ENCODE measurements at regions of chr2 and their contacts with region 1.

Region 1: DNA sequence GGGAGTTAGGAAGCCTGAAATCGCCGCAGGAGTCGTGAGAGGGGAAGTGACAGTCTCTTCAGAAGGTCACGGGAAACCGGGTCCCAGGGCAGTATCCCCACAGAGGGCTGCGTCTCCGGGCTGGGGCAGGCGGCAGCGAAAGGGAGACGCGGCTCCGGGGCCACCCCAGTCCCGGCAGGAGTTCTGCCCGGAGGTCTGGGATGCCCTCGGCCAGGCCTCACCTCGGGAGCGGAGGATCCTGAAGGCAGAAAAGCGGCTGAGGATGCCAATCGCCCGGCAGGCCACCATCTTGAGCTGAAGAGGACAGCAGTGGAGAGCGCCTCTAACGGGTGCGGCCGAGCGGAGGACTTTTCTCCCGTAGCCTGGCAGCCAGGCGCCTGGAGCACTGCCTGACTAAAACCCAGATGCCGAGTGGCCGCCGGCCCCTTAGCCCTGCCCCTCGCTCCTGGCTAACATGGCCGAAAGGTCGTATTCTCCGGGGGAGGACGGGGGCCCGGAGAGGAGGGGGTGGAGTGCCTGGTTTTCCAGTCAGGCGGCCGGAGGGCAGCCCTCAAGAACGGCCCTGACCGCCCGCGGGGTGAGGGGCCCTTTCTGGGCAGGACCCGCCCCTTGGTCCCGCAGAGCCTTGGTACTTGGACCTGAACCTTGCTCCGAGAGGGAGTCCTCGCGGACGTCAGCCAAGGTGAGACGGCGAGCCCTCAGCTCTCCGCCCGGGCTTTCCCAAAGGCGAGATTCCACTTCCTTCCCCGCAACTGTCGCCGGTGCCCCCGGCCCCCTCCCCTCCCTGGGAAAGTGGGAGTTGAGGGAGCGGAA is at the starts of genes HADHA and HADHB:
- DNase-seq: peak; percentile 88
- ATAC-seq: peak; percentile 84
- H3K4me3 Mint-ChIP-seq: peak within 1 kb of the TSS; percentile 97
- H3K27ac Mint-ChIP-seq: peak within 1 kb of the TSS; percentile 100
- H3K4me1 Mint-ChIP-seq: peaks cover 72% of the 10 kb centered on the region
- H3K27me3 Mint-ChIP-seq: no peaks in the 10 kb centered on the region
- CTCF ChIP-seq: no peak
- total RNA-seq, gene HADHA: 127 and 128 TPM in 2 replicates
- total RNA-seq, gene HADHB: 62.4 and 65.6 TPM in 2 replicates

Region 2: GRCh38 chr2:25878361-25879132 is 366.0 kb before region 1 on chr2 and contains the start of gene ASXL2:
- CTCF ChIA-PET with region 1: no interaction called
- POLR2A ChIA-PET with region 1: interaction called, 5 read pairs
- intact Hi-C with region 1: loop called (anchors 1 kb)
- DNase-seq: peak; percentile 98
- ATAC-seq: peak; percentile 88
- H3K4me3 Mint-ChIP-seq: peak within 1 kb of the TSS; percentile 98
- H3K27ac Mint-ChIP-seq: peak within 1 kb of the TSS; percentile 100
- H3K4me1 Mint-ChIP-seq: peaks cover 24% of the 10 kb centered on the region
- H3K27me3 Mint-ChIP-seq: peaks cover 2% of the 10 kb centered on the region
- CTCF ChIP-seq: no peak
- total RNA-seq, gene ASXL2: 38.4 and 41.9 TPM in 2 replicates

Region 3: DNA sequence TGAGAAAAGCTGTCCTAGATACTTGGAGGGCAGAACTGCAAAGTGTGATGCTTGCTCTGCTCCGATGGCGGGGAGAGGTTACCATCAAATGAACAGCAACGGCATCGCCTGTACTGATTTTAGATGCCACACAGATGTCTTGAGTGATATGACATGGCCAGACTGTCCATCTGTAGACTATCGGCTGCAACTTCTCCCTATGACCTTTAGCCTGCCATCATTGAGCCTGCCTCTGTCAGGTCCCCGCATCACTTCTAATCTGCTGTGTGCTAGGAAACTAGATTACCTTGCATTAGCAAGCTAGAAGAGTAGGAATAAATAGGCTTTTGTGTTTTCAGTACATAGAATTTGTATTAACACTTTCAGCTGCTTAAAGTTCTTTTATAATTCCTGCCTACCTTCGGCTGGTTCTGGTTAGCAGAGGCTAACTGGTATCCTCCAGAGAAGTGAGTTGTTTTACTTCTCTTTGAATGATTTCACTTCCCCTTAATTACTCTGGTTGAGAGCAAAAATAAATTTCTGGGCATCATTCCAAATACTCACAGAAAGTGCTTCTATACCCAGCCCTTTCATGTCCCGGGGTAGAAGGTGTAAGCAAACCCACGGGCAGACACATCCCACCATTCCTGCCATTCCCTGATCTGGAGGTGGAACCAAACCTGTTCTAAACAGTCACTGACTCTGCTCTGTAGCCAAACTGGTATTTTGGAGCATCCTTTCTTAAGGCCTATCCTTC is 47.7 kb before region 1 on chr2:
- CTCF ChIA-PET with region 1: no interaction called
- POLR2A ChIA-PET with region 1: no interaction called
- intact Hi-C with region 1: loop called (anchors 2 kb)
- DNase-seq: no peak
- ATAC-seq: peak; percentile 88
- H3K4me3 Mint-ChIP-seq: no peak overlapping the region
- H3K27ac Mint-ChIP-seq: peak overlapping the region; percentile 50
- H3K4me1 Mint-ChIP-seq: peaks cover 28% of the 10 kb centered on the region
- H3K27me3 Mint-ChIP-seq: no peaks in the 10 kb centered on the region
- CTCF ChIP-seq: no peak

Region 4: GRCh38 chr2:26299471-26300101 is 55.1 kb after region 1 on chr2:
- CTCF ChIA-PET with region 1: interaction called, 4 read pairs
- POLR2A ChIA-PET with region 1: interaction called, 43 read pairs
- intact Hi-C with region 1: loop called (anchors 1 kb)
- DNase-seq: no peak
- ATAC-seq: peak; percentile 53
- H3K4me3 Mint-ChIP-seq: no peak overlapping the region
- H3K27ac Mint-ChIP-seq: no peak overlapping the region
- H3K4me1 Mint-ChIP-seq: no peaks in the 10 kb centered on the region
- H3K27me3 Mint-ChIP-seq: no peaks in the 10 kb centered on the region
- CTCF ChIP-seq: no peak

Region 5: GRCh38 chr2:26316041-26316440 is 71.5 kb after region 1 on chr2:
- CTCF ChIA-PET with region 1: no interaction called
- POLR2A ChIA-PET with region 1: no interaction called
- intact Hi-C with region 1: no loop called
- DNase-seq: no peak
- ATAC-seq: no peak
- H3K4me3 Mint-ChIP-seq: no peak overlapping the region
- H3K27ac Mint-ChIP-seq: no peak overlapping the region
- H3K4me1 Mint-ChIP-seq: no peaks in the 10 kb centered on the region
- H3K27me3 Mint-ChIP-seq: no peaks in the 10 kb centered on the region
- CTCF ChIP-seq: no peak

Region 6: DNA sequence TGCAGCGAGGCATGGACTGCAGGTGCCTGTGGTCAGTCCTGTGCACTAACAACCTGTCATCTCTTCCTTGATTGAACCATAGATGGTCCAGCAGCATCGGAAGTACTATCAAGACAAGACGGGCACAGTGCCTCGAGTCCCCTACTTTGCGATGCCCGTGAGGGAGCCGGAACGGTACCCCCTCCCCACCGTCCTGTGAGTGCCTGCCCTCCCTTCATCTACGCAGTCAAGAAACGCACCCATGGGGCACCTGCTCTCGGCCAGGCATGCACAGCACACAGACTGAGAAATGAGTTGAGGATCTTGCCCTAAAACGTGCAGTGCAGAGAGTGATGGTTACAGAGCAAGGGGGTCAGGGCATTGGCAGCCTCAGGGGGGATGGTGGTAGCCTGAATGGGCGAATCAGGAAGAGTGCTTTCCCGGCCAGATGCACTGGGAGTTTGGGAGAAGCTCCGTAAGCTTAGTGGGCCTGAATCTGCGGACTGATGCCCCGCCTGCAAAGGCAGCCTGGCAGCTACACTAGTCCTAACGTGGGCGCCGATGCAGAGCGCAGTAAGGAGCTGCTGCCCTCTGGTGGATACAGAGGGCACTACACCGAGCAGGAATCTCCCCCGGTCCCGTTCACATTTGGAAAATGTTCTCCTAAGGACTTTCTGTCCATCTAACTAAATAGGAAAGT is 333.1 kb after region 1 on chr2:
- CTCF ChIA-PET with region 1: no interaction called
- POLR2A ChIA-PET with region 1: no interaction called
- intact Hi-C with region 1: loop called (anchors 5 kb)
- DNase-seq: peak; percentile 49
- ATAC-seq: peak; percentile 84
- H3K4me3 Mint-ChIP-seq: no peak overlapping the region
- H3K27ac Mint-ChIP-seq: no peak overlapping the region
- H3K4me1 Mint-ChIP-seq: no peaks in the 10 kb centered on the region
- H3K27me3 Mint-ChIP-seq: peaks cover 30% of the 10 kb centered on the region
- CTCF ChIP-seq: no peak